PC-3 (cell line): ENCODE measurements at regions of chrX and their contacts with region 1.

Region 1: DNA sequence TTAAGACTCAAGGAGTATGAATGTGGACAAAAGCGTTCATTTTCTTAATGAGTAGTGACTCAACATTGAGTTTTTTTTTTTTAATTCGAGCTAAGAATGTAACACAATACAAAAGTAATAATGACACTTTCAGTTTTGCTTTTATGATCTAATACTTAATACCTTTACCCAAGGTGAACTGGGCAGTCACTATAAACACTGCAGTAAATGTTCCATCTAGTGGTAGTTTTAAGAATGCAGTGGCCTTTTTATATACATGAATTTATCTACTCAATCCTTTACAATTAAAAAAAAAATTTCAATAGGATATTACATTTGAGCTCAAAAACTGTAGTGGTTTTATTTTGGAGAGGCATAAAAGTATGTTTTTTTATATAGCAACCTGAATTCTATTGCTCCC is 33.9 kb downstream of the PDK3 start:
- DNase-seq: peak; percentile 55
- ATAC-seq: peak; percentile 33; the same call in 1 of the 2 replicates
- H3K4me3 ChIP-seq: no peak overlapping the region
- H3K27ac ChIP-seq: no peak overlapping the region
- H3K4me1 ChIP-seq: peaks cover 13% of the 10 kb centered on the region
- H3K27me3 ChIP-seq: no peaks in the 10 kb centered on the region
- CTCF ChIP-seq: peak; percentile 71

Region 2: DNA sequence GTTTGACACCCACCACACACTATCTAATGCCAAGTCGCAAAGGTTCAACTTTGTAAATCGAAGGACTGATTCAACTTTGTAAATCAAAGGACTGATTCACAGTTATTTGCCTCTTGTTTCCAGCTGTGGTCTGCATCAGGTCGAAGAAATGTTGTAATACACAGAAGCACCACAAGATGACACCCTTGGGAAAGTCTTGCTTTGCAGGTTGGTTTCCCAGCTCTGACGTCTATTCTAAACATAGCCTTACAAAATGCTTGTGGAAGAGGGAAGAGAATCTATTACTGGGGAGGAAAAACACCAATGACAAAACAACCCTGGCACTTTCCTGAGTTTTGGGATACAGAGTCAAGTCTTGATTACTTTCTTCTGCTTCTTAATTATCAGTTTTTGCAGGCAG is 103.2 kb before region 1 on chrX:
- CTCF ChIA-PET with region 1: interaction called, 27 read pairs
- POLR2A ChIA-PET with region 1: no interaction called
- intact Hi-C with region 1: loop called (anchors 1 kb)
- DNase-seq: peak; percentile 85
- ATAC-seq: peak; percentile 84
- H3K4me3 ChIP-seq: no peak overlapping the region
- H3K27ac ChIP-seq: no peak overlapping the region
- H3K4me1 ChIP-seq: no peaks in the 10 kb centered on the region
- H3K27me3 ChIP-seq: 0 out of 2 replicates have a peak, but pooled peaks cover 14% of the 10 kb centered on the region
- CTCF ChIP-seq: peak; percentile 87

Region 3: GRCh38 chrX:24464836-24465531 is 34.0 kb before region 1 on chrX and contains the start of gene PDK3:
- CTCF ChIA-PET with region 1: interaction called, 3 read pairs
- POLR2A ChIA-PET with region 1: no interaction called
- intact Hi-C with region 1: loop called (anchors 2 kb)
- DNase-seq: peak; percentile 90
- ATAC-seq: peak; percentile 95
- H3K4me3 ChIP-seq: peak within 1 kb of the TSS; percentile 88
- H3K27ac ChIP-seq: no peak within 1 kb of the TSS
- H3K4me1 ChIP-seq: peaks cover 11% of the 10 kb centered on the region; the same call in 1 of the 2 replicates
- H3K27me3 ChIP-seq: no peaks in the 10 kb centered on the region
- CTCF ChIP-seq: no peak
- total RNA-seq, gene PDK3: 22.6 and 24.4 TPM in 2 replicates

Region 4: DNA sequence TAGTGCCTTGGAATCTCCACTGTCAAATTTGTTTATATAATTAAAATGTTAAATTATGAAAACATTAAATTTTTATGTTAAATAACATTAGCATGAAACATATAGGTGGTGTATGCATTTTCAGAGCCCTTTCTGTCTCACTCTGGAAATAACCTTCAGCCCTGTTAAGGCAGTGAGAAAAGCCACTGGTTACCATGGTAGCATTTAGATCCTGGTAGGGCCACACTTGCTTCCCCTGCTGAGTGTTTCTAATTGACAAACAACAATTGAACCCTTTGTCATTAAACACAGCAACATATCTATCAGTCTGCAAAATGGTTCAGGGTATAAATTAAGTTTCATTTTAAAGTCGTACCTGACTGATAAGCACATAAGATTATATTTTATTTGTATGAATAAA is 29.6 kb after region 1 on chrX:
- CTCF ChIA-PET with region 1: no interaction called
- POLR2A ChIA-PET with region 1: no interaction called
- intact Hi-C with region 1: no loop called
- DNase-seq: no peak
- ATAC-seq: no peak
- H3K4me3 ChIP-seq: no peak overlapping the region
- H3K27ac ChIP-seq: no peak overlapping the region
- H3K4me1 ChIP-seq: no peaks in the 10 kb centered on the region
- H3K27me3 ChIP-seq: no peaks in the 10 kb centered on the region
- CTCF ChIP-seq: no peak